ENCODE measurements at regions of chr11 and their contacts with region 1.

Region 1: DNA sequence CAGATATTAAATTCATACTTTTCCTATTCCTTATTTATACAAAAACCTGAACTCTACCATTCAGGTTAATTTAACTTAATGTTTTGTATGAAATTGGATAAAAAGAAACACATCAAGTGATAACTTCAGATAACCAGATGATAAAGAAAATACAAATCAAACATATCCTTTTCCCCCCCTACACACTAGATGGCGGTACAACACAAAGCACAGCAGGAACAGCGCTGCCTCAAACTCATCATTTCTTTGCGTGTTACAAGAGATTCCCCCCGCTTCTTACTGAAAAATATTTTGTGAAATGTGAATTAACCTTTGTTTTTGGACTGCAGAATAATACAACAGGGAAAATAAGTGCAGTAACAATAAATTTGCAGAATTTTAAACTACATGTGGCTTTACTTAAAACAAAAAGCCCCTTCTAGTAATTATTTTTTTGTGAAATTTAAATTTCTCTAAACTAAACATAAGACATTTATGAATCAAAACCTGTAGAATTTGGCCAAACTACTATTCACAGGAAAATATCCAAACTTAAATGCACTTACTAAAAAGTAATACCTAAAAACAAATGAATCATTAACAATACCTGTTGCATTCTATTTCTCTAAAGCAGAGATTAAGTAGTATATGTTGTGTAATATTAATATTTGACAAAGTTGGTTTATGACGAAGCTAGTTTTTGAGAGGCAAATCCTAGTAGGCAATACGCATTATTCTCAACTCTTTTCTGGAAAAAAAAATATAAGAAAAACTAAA is 74.4 kb downstream of the ARHGAP32 start:
- DNase-seq: no peak
- H3K4me3 ChIP-seq: no peak overlapping the region
- H3K27ac ChIP-seq: no peak overlapping the region
- H3K4me1 ChIP-seq: no peaks in the 10 kb centered on the region
- H3K27me3 ChIP-seq: no peaks in the 10 kb centered on the region
- CTCF ChIP-seq: peak; percentile 74 to 87 (median 86)

Region 2: GRCh38 chr11:129331871-129332274 is 214.1 kb after region 1 on chr11:
- intact Hi-C with region 1: loop called (anchors 1 kb)
- DNase-seq: peak in 1 of 2 donors; percentile 86
- H3K4me3 ChIP-seq: no peak overlapping the region
- H3K27ac ChIP-seq: no peak overlapping the region
- H3K4me1 ChIP-seq: no peaks in the 10 kb centered on the region
- H3K27me3 ChIP-seq: no peaks in the 10 kb centered on the region
- CTCF ChIP-seq: peak; percentile 73 to 87 (median 87)

Region 3: GRCh38 chr11:129750349-129751292 is 632.8 kb after region 1 on chr11:
- intact Hi-C with region 1: loop called (anchors 5 kb)
- DNase-seq: peak in 1 of 2 donors; percentile 68
- H3K4me3 ChIP-seq: peak overlapping the region; percentile 37 to 53
- H3K27ac ChIP-seq: no peak overlapping the region
- H3K4me1 ChIP-seq: no peaks in the 10 kb centered on the region
- H3K27me3 ChIP-seq: no peaks in the 10 kb centered on the region
- CTCF ChIP-seq: peak; percentile 89 to 97 (median 96)

Measured in ascending aorta (tissue), 2 donors.